Heart right ventricle (tissue), 16 donors: ENCODE measurements at regions of chr11 and their contacts with region 1.

Region 1: DNA sequence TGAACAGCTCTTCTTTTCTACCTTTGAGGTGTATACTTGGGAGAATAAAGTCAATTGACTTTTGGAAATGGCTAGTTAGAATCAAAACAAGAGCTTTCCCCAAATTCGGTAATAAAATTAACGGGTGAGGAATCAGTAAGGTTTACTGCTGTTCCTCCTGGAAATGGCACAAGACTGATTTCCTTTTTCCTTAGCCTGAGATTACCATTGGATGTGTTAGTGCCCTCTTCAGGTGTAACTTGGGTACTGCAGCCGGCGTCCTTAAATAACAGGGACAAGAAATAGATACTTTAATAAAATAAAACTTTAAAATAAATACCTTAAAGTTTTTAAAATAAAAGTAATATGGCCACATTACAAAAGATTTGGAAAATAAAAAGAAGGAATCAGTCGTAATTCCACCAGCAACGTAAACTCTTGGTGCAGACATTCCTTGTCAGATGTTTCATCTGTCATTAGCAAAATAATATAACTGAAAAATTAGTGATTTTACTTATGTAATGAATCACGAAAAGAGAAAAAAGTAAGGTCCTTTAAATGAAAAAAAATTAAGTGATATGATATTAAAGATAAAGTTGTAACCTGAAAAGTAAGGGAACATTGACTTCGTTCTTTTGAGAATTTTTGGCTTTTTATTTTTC is 29.7 kb downstream of the ZFTA start:
- DNase-seq: peak; percentile 41 to 68
- ATAC-seq: peak in 5 of 8 donors; percentile 47 to 83 (median 67)
- H3K4me3 ChIP-seq: no peak overlapping the region
- H3K27ac ChIP-seq: peak overlapping the region in 3 of 10 donors; percentile 1 to 25 (median 7)
- H3K4me1 ChIP-seq: peaks cover 0 to 15% (median 5%) of the 10 kb centered on the region in 9 donors
- H3K27me3 ChIP-seq: no peaks in the 10 kb centered on the region
- CTCF ChIP-seq: peak; percentile 89 to 99 (median 96)

Region 2: GRCh38 chr11:63490551-63491239 is 248.1 kb before region 1 on chr11 and contains the start of gene PLAAT5:
- intact Hi-C with region 1: loop called in 2 of 10 experiments (anchors 10 kb)
- DNase-seq: peak in 1 of 2 donors; percentile 48
- ATAC-seq: peak; percentile 72 to 90 (median 86)
- H3K4me3 ChIP-seq: peak within 1 kb of the TSS; percentile 30 to 63 (median 58)
- H3K27ac ChIP-seq: peak within 1 kb of the TSS in 8 of 10 donors; percentile 29 to 82 (median 49)
- H3K4me1 ChIP-seq: peaks cover 0 to 30% (median 21%) of the 10 kb centered on the region in 9 donors
- H3K27me3 ChIP-seq: peaks cover 0 to 17% (median 0%) of the 10 kb centered on the region in 7 donors
- CTCF ChIP-seq: peak in 1 of 9 donors; percentile 4
- total RNA-seq, gene PLAAT5: 0.69 to 7.2 (median 1.8) TPM

Region 3: DNA sequence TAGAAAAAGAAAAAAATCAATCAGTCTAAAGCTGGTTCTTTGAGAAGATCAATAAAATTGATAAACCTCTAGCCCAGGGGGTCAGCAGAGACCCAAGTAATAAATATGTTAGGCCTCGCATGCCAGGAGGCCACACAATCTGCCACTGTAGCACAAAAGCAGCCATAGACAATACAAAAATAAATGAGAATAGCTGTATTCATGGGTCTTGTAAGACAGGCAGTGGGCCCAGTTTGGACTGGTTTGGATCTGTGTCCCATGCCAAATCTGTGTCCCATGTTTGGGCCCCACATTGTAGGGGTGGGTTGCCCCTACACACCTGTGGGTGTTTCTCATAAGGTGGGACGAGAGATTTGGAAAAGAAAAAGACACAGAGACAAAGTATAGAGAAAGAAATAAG is 208.8 kb before region 1 on chr11:
- intact Hi-C with region 1: no loop called
- DNase-seq: no peak
- ATAC-seq: no peak
- H3K4me3 ChIP-seq: no peak overlapping the region
- H3K27ac ChIP-seq: no peak overlapping the region
- H3K4me1 ChIP-seq: peaks cover 0 to 30% (median 0%) of the 10 kb centered on the region in 9 donors
- H3K27me3 ChIP-seq: peaks cover 0 to 6% (median 0%) of the 10 kb centered on the region in 7 donors
- CTCF ChIP-seq: no peak

Region 4: DNA sequence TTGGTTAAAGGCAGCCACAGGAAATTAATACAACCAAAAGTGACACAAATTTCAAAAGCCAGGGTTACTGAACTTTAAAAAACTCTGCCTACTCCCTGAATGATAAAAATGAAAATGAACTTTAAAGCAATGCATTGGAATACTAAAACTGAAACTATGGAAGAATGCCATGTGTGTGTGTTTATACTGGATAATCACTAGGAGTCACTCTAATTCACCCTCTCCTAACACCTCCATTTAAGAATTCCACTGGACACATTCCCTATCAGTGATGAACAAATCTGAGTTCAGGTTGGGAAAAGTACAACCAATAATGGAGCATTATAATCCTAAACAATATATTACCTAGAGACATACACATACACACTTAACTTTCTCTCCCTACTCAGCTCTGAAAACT is 97.1 kb before region 1 on chr11:
- intact Hi-C with region 1: loop called in 8 of 10 experiments (anchors 2 to 10 kb)
- DNase-seq: no peak
- ATAC-seq: peak in 1 of 8 donors; percentile 31
- H3K4me3 ChIP-seq: no peak overlapping the region
- H3K27ac ChIP-seq: no peak overlapping the region
- H3K4me1 ChIP-seq: peaks cover 0 to 7% (median 0%) of the 10 kb centered on the region in 9 donors
- H3K27me3 ChIP-seq: no peaks in the 10 kb centered on the region
- CTCF ChIP-seq: peak in 3 of 9 donors; percentile 19 to 42 (median 23)

Region 5: DNA sequence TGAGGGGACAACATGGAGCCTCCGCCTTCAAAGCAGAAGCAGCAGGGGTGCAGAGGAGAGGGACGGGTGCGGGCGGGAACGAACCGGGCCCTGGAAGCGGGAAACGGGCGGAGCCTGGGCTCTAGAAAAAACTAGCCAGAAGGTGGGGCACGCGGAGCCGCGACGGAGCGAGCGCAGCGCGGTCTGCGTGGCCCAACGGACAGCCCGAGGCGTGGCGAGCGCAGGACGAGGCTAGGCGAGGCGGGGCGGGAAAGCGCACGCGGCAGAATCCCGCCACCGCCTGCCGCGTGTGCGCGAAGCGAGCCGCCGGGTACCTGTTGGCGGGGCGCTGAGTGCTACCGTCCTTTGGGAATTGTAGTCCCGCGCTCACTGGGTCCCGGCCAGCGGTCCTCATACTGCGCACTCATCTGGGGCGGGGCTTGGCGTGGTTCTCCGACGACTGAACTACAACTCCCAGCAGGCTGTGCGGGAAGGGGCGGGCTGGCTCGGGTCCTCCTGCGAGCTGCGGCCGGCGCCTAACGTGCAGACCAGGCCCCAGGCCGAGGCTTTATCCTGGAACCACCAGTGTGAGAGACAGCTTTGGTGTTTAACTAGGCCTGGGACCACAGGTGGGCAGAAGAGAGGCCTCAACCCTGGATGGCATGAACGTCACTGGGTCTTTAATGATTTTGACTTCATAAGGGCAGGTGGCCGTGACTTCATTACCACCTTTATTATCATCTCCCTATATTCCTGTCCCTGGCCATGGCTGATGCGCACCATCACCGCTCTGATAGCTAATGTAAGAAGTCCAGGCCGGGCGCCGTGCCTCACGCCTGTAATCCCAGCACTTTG is 67.3 kb before region 1 on chr11 and contains the start of gene ATL3:
- intact Hi-C with region 1: loop called in 4 of 10 experiments (anchors 2 to 10 kb)
- DNase-seq: peak; percentile 97 to 98
- ATAC-seq: peak; percentile 96 to 97 (median 97)
- H3K4me3 ChIP-seq: peak within 1 kb of the TSS; percentile 71 to 99 (median 93)
- H3K27ac ChIP-seq: peak within 1 kb of the TSS; percentile 95 to 100 (median 98)
- H3K4me1 ChIP-seq: peaks cover 0 to 61% (median 42%) of the 10 kb centered on the region in 9 donors
- H3K27me3 ChIP-seq: no peaks in the 10 kb centered on the region
- CTCF ChIP-seq: peak in 4 of 9 donors; percentile 24 to 43 (median 34)
- total RNA-seq, gene ATL3: 8.5 to 22.2 (median 12.5) TPM

Region 6: GRCh38 chr11:63829823-63830489 is 91.1 kb after region 1 on chr11:
- intact Hi-C with region 1: no loop called
- DNase-seq: no peak
- ATAC-seq: peak in 5 of 8 donors; percentile 27 to 52 (median 46)
- H3K4me3 ChIP-seq: no peak overlapping the region
- H3K27ac ChIP-seq: no peak overlapping the region
- H3K4me1 ChIP-seq: no peaks in the 10 kb centered on the region
- H3K27me3 ChIP-seq: no peaks in the 10 kb centered on the region
- CTCF ChIP-seq: peak in 6 of 9 donors; percentile 8 to 32 (median 20)